ENCODE measurements at regions of chr19 and their contacts with region 1.

Region 1: GRCh38 chr19:38618590-38619360 is at the start of gene EIF3K:
- DNase-seq: peak; percentile 86 to 100 (median 97)
- ATAC-seq: peak; percentile 68
- H3K4me3 ChIP-seq: peak within 1 kb of the TSS; percentile 84 to 85
- H3K4me3 Mint-ChIP-seq: peak within 1 kb of the TSS; percentile 99
- H3K27ac ChIP-seq: peak within 1 kb of the TSS; percentile 89 to 96
- H3K27ac Mint-ChIP-seq: peak within 1 kb of the TSS; percentile 98
- H3K4me1 ChIP-seq: peaks cover 38% of the 10 kb centered on the region
- H3K4me1 Mint-ChIP-seq: peaks cover 49% of the 10 kb centered on the region
- H3K27me3 ChIP-seq: no peaks in the 10 kb centered on the region
- H3K27me3 Mint-ChIP-seq: no peaks in the 10 kb centered on the region
- CTCF ChIP-seq: no peak
- total RNA-seq, gene EIF3K: 313 to 315 TPM

Region 2: GRCh38 chr19:38387550-38388348 is 231.0 kb before region 1 on chr19 and contains the start of gene GGN:
- CTCF ChIA-PET with region 1: no interaction called
- POLR2A ChIA-PET with region 1: no interaction called
- intact Hi-C with region 1: loop called in 1 of 2 experiments (anchors 5 kb)
- DNase-seq: peak; percentile 54 to 87 (median 76)
- ATAC-seq: peak; percentile 70
- H3K4me3 ChIP-seq: peak within 1 kb of the TSS; percentile 55 to 68
- H3K4me3 Mint-ChIP-seq: peak within 1 kb of the TSS; percentile 87
- H3K27ac ChIP-seq: no peak within 1 kb of the TSS
- H3K27ac Mint-ChIP-seq: peak within 1 kb of the TSS; percentile 82
- H3K4me1 ChIP-seq: peaks cover 36% of the 10 kb centered on the region
- H3K4me1 Mint-ChIP-seq: peaks cover 19% of the 10 kb centered on the region
- H3K27me3 ChIP-seq: peaks cover 4 to 13% of the 10 kb centered on the region in 2 experiments
- H3K27me3 Mint-ChIP-seq: peaks cover 29% of the 10 kb centered on the region
- CTCF ChIP-seq: no peak
- total RNA-seq, gene GGN: 0.67 TPM in 1 of 2 experiments, not detected in the other

Region 3: DNA sequence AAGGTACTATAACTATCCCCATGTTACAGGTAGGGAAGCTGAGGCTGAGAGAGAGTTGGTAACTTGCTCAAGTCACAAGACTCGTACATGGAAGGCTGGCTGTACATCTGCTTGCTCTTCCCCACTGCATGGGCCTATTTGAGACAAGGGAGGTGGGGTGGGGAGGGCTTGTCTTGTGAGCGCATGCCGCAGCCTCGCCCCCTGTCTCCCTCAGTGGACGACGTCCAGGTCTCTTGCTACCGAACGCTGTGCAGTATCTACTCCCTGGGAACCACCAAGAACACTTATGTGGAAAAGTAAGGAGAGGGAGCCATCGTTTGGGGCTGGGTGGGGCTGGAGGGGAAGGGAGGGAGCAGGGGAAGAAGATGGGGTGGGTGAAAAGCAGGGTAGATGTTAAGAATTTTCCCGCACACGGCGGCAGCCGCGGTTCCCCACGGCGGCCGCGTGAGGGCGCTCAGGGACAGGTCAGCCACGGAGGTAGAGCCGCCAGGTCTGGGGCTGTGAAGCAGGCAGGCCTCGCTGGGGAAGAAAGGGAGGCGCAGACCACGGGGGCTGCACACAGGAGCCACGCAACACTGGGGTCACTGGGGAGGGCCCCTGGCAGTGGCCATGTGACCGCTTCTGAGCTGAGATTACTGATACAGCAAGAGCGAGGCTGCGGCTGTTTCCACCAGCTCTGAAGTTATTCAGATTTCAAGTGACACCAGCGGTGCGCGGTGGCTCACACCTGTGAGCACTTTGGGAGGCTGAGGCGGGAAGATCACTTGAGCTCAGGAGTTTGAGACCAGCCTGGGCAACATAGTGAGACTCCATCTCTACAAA is 103.8 kb before region 1 on chr19:
- CTCF ChIA-PET with region 1: interaction called, 26 read pairs
- POLR2A ChIA-PET with region 1: interaction called, 9 read pairs
- intact Hi-C with region 1: loop called in 1 of 2 experiments (anchors 1 kb)
- DNase-seq: peak; percentile 53 to 89 (median 73)
- ATAC-seq: peak; percentile 99
- H3K4me3 ChIP-seq: no peak overlapping the region
- H3K4me3 Mint-ChIP-seq: no peak overlapping the region
- H3K27ac ChIP-seq: no peak overlapping the region
- H3K27ac Mint-ChIP-seq: no peak overlapping the region
- H3K4me1 ChIP-seq: peaks cover 9% of the 10 kb centered on the region
- H3K4me1 Mint-ChIP-seq: peaks cover 7% of the 10 kb centered on the region
- H3K27me3 ChIP-seq: peaks cover 0 to 4% of the 10 kb centered on the region in 2 experiments
- H3K27me3 Mint-ChIP-seq: peaks cover 2% of the 10 kb centered on the region
- CTCF ChIP-seq: peak; percentile 92

Region 4: DNA sequence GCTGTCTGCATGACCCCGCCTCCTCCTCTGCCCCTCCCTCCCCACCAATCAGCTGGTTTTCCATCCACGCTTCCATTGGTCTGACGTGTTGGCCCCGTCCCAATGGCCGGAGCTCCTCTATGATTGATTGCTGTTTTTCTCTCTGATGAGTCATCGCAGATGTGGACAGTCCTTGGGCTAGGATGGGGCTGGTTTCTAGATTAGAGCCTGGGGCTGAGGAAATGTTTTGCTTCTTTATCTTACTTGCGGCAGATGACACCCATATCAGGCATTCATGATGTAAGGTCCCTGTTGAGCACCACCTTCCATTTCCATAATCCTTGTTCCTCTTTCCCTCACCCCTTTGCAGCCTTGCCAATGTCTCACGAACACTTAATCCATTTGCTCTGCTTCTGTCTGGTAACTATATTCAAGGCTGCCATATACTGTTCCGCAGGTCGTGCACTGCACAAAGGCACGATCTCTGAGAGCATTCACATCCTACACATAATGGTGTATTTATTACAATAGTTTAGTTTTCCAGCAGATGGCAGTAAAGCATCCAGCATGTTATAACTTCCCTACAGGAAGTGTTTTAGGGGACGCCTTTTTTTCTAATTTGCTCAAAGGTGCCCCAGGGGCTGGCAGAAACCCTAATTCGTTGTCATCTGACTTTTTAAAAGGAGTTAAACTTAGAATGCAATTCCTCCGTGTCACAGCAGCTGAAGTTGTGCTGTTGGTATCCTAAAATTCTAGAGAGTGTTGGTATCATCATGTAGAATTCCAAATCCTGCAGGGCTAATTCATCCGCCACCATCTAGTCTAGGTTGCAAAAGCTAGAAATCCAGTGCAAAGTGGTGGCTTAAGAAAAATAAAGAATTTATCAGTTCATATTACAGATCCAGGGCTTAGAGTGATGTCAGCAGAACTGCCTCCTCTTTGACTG is 74.5 kb before region 1 on chr19:
- CTCF ChIA-PET with region 1: interaction called, 13 read pairs
- POLR2A ChIA-PET with region 1: no interaction called
- intact Hi-C with region 1: loop called (anchors 2 to 5 kb)
- DNase-seq: peak in 4 of 9 experiments; percentile 16 to 81 (median 64)
- ATAC-seq: peak; percentile 74
- H3K4me3 ChIP-seq: no peak overlapping the region
- H3K4me3 Mint-ChIP-seq: peak overlapping the region; percentile 9
- H3K27ac ChIP-seq: no peak overlapping the region
- H3K27ac Mint-ChIP-seq: no peak overlapping the region
- H3K4me1 ChIP-seq: peaks cover 16% of the 10 kb centered on the region
- H3K4me1 Mint-ChIP-seq: peaks cover 16% of the 10 kb centered on the region
- H3K27me3 ChIP-seq: no peaks in the 10 kb centered on the region
- H3K27me3 Mint-ChIP-seq: no peaks in the 10 kb centered on the region
- CTCF ChIP-seq: peak; percentile 67

Region 5: DNA sequence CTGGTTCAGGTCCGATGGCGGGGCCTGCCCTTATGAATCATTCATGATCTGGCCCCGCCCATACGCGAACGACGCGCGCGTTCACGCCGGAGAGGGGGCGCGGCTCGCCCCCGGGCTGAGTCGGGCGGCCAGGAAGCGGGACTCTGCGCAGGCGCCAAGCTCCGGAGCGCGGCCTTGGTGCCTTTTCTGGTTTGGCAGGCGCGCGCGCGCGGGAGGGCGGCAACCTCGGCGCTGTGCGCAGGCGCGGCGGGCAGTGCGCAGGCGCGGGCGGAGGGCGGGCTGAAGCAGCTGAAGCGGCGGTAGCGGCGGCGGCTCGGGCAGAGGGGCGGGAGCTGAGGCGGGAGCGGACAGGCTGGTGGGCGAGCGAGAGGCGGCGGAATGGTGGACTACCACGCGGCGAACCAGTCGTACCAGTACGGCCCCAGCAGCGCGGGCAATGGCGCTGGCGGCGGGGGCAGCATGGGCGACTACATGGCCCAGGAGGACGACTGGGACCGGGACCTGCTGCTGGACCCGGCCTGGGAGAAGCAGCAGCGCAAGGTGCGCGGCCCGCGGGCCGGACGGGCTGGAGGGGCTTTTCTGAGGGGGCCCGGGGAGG is 28.7 kb after region 1 on chr19 and contains the start of gene ACTN4:
- CTCF ChIA-PET with region 1: no interaction called
- POLR2A ChIA-PET with region 1: interaction called, 8 read pairs
- intact Hi-C with region 1: loop called (anchors 1 kb)
- DNase-seq: peak; percentile 99 to 100 (median 100)
- ATAC-seq: peak; percentile 94
- H3K4me3 ChIP-seq: peak within 1 kb of the TSS; percentile 83 to 89
- H3K4me3 Mint-ChIP-seq: peak within 1 kb of the TSS; percentile 91
- H3K27ac ChIP-seq: peak within 1 kb of the TSS; percentile 49 to 63
- H3K27ac Mint-ChIP-seq: peak within 1 kb of the TSS; percentile 73
- H3K4me1 ChIP-seq: peaks cover 23% of the 10 kb centered on the region
- H3K4me1 Mint-ChIP-seq: peaks cover 32% of the 10 kb centered on the region
- H3K27me3 ChIP-seq: peaks cover 7 to 16% of the 10 kb centered on the region in 2 experiments
- H3K27me3 Mint-ChIP-seq: peaks cover 31% of the 10 kb centered on the region
- CTCF ChIP-seq: no peak
- total RNA-seq, gene ACTN4: 110 to 111 TPM

Region 6: DNA sequence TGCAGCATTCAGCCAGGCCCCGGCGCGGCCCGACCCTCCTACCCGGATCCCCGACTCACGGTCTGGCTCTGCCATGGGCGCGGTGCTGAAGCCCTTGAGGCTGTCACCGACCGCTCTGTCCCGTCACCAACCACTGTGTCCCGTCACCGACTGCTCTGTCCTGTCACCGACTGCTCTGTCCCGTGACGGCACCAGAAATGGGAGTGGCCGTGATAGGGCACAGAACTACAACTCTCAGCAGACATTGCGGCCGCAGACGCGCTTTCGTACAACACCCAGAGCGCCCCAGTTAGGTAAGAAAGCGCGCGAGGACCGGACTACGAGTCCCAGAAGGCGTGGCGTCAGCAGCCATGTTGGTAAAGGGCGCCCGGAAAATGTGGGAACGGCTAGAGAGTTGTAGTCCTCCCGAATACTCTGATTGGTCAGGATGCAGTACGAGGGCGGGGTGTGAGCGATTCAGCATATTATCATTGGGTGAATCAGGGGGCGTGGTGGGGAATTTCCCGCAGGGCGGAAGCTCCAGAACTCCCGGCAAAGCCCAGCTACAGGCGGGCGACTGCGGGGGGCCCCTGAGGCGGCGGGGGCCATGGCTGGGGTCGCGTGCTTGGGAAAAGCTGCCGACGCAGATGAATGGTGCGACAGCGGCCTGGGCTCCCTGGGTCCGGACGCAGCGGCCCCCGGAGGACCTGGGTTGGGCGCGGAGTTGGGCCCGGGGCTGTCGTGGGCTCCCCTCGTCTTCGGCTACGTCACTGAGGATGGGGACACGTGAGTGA is 280.9 kb after region 1 on chr19 and contains the starts of genes NFKBIB and SIRT2:
- CTCF ChIA-PET with region 1: no interaction called
- POLR2A ChIA-PET with region 1: no interaction called
- intact Hi-C with region 1: loop called in 1 of 2 experiments (anchors 1 kb)
- DNase-seq: peak; percentile 97 to 100 (median 99)
- ATAC-seq: peak; percentile 85
- H3K4me3 ChIP-seq: peak within 1 kb of the TSS; percentile 68 to 88
- H3K4me3 Mint-ChIP-seq: peak within 1 kb of the TSS; percentile 93
- H3K27ac ChIP-seq: peak within 1 kb of the TSS; percentile 93 to 100
- H3K27ac Mint-ChIP-seq: peak within 1 kb of the TSS; percentile 98
- H3K4me1 ChIP-seq: peaks cover 23% of the 10 kb centered on the region
- H3K4me1 Mint-ChIP-seq: peaks cover 57% of the 10 kb centered on the region
- H3K27me3 ChIP-seq: no peaks in the 10 kb centered on the region
- H3K27me3 Mint-ChIP-seq: no peaks in the 10 kb centered on the region
- CTCF ChIP-seq: no peak
- total RNA-seq, gene NFKBIB: 62.9 to 66.1 TPM
- total RNA-seq, gene SIRT2: 90.6 to 95.1 TPM

Region 7: GRCh38 chr19:39390755-39391592 is 772.2 kb after region 1 on chr19 and contains the starts of genes MED29 and PAF1:
- CTCF ChIA-PET with region 1: no interaction called
- POLR2A ChIA-PET with region 1: no interaction called
- intact Hi-C with region 1: loop called in 1 of 2 experiments (anchors 2 kb)
- DNase-seq: peak; percentile 89 to 100 (median 94)
- ATAC-seq: peak; percentile 87
- H3K4me3 ChIP-seq: peak within 1 kb of the TSS; percentile 86 to 95
- H3K4me3 Mint-ChIP-seq: peak within 1 kb of the TSS; percentile 96
- H3K27ac ChIP-seq: peak within 1 kb of the TSS; percentile 99
- H3K27ac Mint-ChIP-seq: peak within 1 kb of the TSS; percentile 100
- H3K4me1 ChIP-seq: peaks cover 19% of the 10 kb centered on the region
- H3K4me1 Mint-ChIP-seq: peaks cover 37% of the 10 kb centered on the region
- H3K27me3 ChIP-seq: no peaks in the 10 kb centered on the region
- H3K27me3 Mint-ChIP-seq: no peaks in the 10 kb centered on the region
- CTCF ChIP-seq: no peak
- total RNA-seq, gene MED29: 45.9 to 55.1 TPM
- total RNA-seq, gene PAF1: 109 to 117 TPM